ENCODE measurements at regions of chr3 and their contacts with region 1.

Region 1: DNA sequence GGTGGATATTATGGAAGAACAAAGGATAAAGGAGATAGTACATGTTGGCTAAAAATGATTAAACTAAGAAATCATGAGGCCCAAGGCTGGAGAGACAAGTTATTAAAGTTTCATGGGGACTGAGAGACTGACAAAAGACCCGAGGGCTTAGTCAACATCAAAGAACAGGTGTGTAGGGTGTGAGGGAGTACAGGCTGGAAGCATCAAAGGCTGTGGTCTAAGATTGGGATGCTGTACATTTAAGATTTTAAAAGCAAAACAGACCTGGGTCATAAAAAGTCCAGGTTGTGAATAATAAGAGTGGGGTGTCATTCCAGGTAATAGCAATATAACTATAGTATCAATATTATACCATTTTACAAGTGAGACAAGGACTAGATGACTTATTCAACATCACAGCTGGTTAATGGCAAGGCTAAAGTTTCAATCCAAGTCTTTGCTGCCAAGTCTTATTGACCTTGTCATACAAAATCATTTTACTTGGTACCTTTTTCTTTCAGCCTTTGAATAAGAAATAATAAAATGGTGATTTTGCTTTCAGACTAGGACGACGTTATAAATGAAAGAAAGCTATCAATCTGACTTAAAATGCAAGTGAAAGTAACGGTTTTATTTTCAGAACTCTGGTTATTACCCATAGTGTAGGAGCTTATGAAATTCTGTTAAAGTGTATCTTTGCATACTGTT is 211.6 kb downstream of the TNIK start:
- DNase-seq: no peak
- ATAC-seq: peak; percentile 80
- H3K4me3 ChIP-seq: peak overlapping the region; percentile 53
- H3K27ac ChIP-seq: peak overlapping the region; percentile 80
- H3K4me1 ChIP-seq: peaks cover 68% of the 10 kb centered on the region
- H3K27me3 ChIP-seq: no peaks in the 10 kb centered on the region
- CTCF ChIP-seq: no peak
- EP300 ChIP-seq: peak; percentile 80 to 90
- POLR2A ChIP-seq: no peak
- RAD21 ChIP-seq: no peak

Region 2: GRCh38 chr3:171225708-171226107 is 22.9 kb before region 1 on chr3:
- CTCF ChIA-PET with region 1: interaction called, 4 read pairs
- POLR2A ChIA-PET with region 1: interaction called, 3 read pairs
- RAD21 ChIA-PET with region 1: interaction called, 15 read pairs
- SMC1A ChIA-PET with region 1: interaction called, 15 read pairs
- in situ Hi-C with region 1: no loop called
- intact Hi-C with region 1: no loop called
- DNase-seq: no peak
- ATAC-seq: no peak
- H3K4me3 ChIP-seq: no peak overlapping the region
- H3K27ac ChIP-seq: no peak overlapping the region; the same call in 1 of the 2 replicates
- H3K4me1 ChIP-seq: peaks cover 17% of the 10 kb centered on the region
- H3K27me3 ChIP-seq: no peaks in the 10 kb centered on the region
- CTCF ChIP-seq: no peak
- EP300 ChIP-seq: no peak
- POLR2A ChIP-seq: no peak
- RAD21 ChIP-seq: no peak

Region 3: DNA sequence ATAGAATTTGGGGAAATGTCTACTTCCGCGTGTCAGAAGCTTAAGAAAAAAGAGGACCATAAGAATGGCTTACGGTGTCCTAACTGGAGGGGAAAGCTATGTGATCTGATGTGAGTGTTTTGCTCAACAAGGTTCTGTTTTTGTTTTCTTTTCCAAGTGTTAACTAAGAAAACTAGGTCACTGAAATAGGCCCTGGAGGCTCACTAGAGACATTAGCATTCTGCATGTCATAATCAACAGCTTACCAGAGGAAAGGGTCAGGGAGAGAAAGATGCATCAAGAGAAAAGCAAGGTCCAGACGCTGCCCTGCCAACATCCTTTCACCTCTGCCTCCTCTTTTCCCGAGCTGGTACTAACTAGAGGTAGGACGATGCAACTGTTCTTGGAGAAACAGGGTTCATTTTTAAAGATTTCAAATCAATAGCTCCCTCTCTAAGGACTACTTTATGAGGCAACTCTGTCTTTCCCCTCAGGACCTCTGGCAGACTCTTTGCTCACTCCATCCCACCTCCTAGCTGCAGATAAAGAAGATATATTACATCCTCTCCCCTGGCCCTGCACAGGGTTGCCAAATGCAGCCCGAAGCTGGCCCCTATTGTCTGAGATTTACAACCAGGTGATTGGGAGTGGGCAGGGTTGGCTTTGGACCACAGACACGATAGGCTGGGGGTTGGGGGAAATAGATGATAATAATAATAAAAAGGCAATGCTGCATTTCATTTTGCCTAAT is 12.1 kb before region 1 on chr3:
- CTCF ChIA-PET with region 1: interaction called, 5 read pairs
- POLR2A ChIA-PET with region 1: interaction called, 4 read pairs
- RAD21 ChIA-PET with region 1: interaction called, 6 read pairs
- SMC1A ChIA-PET with region 1: interaction called, 11 read pairs
- in situ Hi-C with region 1: no loop called
- intact Hi-C with region 1: no loop called
- DNase-seq: no peak
- ATAC-seq: peak; percentile 10; the same call in 1 of the 3 replicates
- H3K4me3 ChIP-seq: no peak overlapping the region
- H3K27ac ChIP-seq: peak overlapping the region; percentile 40; the same call in 1 of the 2 replicates
- H3K4me1 ChIP-seq: peaks cover 55% of the 10 kb centered on the region
- H3K27me3 ChIP-seq: no peaks in the 10 kb centered on the region
- CTCF ChIP-seq: no peak
- EP300 ChIP-seq: no peak
- POLR2A ChIP-seq: no peak
- RAD21 ChIP-seq: no peak

Region 4: DNA sequence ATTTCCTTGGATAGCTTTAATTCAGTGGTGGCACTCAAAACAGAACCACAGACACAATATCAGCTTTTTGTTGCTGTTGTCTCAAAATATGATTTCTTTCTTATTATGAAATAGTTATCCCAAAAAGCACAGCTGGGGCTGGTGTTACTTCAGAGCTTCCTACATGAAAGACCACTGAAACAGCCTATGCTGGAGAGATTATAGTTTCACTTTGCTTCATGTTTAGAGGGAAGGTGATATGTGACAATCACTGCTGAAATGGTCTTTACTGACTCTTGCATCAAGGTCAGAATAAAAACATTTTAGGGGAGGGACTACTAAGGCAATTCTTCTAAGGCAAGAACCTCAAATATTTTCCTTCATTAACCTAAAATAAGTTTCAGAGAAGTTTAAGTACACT is 21.0 kb after region 1 on chr3:
- CTCF ChIA-PET with region 1: interaction called, 42 read pairs
- POLR2A ChIA-PET with region 1: interaction called, 5 read pairs
- RAD21 ChIA-PET with region 1: interaction called, 23 read pairs
- SMC1A ChIA-PET with region 1: interaction called, 657 read pairs
- in situ Hi-C with region 1: no loop called
- intact Hi-C with region 1: no loop called
- DNase-seq: no peak
- ATAC-seq: peak; percentile 54
- H3K4me3 ChIP-seq: no peak overlapping the region
- H3K27ac ChIP-seq: peak overlapping the region; percentile 80
- H3K4me1 ChIP-seq: peaks cover 72% of the 10 kb centered on the region
- H3K27me3 ChIP-seq: no peaks in the 10 kb centered on the region
- CTCF ChIP-seq: no peak
- EP300 ChIP-seq: no peak
- POLR2A ChIP-seq: no peak
- RAD21 ChIP-seq: no peak

Region 5: GRCh38 chr3:171284308-171285075 is 35.9 kb after region 1 on chr3:
- CTCF ChIA-PET with region 1: interaction called, 25 read pairs
- POLR2A ChIA-PET with region 1: interaction called, 17 read pairs
- RAD21 ChIA-PET with region 1: interaction called, 43 read pairs
- SMC1A ChIA-PET with region 1: interaction called, 657 read pairs
- in situ Hi-C with region 1: no loop called
- intact Hi-C with region 1: loop called (anchors 5 kb)
- DNase-seq: peak; percentile 76
- ATAC-seq: peak; percentile 64
- H3K4me3 ChIP-seq: peak overlapping the region; percentile 36; the same call in 1 of the 2 replicates
- H3K27ac ChIP-seq: peak overlapping the region; percentile 96
- H3K4me1 ChIP-seq: peaks cover 61% of the 10 kb centered on the region
- H3K27me3 ChIP-seq: no peaks in the 10 kb centered on the region
- CTCF ChIP-seq: no peak
- EP300 ChIP-seq: peak in 1 of 2 experiments; percentile 21; a peak in 1 of 4 replicates
- POLR2A ChIP-seq: no peak
- RAD21 ChIP-seq: no peak

Region 6: DNA sequence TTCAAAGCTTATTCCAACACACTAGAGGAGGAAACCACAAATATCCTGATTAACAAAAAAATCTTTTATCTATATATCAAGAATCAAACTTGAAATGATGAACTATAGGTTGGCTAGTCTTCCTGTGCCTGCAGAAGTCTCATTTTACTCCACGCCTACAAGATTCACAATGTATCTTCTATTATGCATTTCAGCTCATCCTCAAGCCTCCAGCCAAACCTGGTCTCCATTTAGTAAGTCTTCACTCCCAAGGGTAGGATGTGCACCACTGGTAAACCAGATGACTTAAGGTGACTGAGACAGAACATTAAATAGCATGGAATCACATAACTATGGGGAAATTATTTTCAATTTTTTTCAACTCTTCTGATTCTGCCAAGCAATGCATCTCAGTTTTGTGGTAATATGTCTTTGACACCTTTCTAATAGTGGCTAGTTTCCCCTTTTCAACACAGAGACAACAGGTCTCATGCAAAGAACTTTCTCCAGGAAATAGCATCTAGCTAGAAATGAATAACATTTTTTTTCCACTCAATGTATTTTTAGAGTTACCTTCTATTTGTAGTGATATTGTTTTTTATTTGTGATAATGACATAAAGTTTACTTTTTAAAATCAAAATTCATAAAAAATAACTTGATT is 44.7 kb after region 1 on chr3:
- CTCF ChIA-PET with region 1: interaction called, 3 read pairs
- POLR2A ChIA-PET with region 1: interaction called, 4 read pairs
- RAD21 ChIA-PET with region 1: interaction called, 24 read pairs
- SMC1A ChIA-PET with region 1: interaction called, 12 read pairs
- in situ Hi-C with region 1: no loop called
- intact Hi-C with region 1: no loop called
- DNase-seq: no peak
- ATAC-seq: peak; percentile 67
- H3K4me3 ChIP-seq: no peak overlapping the region
- H3K27ac ChIP-seq: peak overlapping the region; percentile 60
- H3K4me1 ChIP-seq: peaks cover 60% of the 10 kb centered on the region
- H3K27me3 ChIP-seq: no peaks in the 10 kb centered on the region
- CTCF ChIP-seq: no peak
- EP300 ChIP-seq: 0 out of 4 replicates have a peak, but pooled peaks have one; percentile 7 to 22
- POLR2A ChIP-seq: no peak
- RAD21 ChIP-seq: no peak